Activated B cell treated with CpG ODN at 0.5 μM for 24 hours (primary cell): ENCODE measurements at regions of chr18 and their contacts with region 1.

Region 1: GRCh38 chr18:3593904-3594661 is 144.1 kb downstream of the TGIF1 start:
- DNase-seq: peak; percentile 76
- ATAC-seq: peak; percentile 78
- H3K4me3 Mint-ChIP-seq: peak overlapping the region; percentile 90
- H3K27ac Mint-ChIP-seq: peak overlapping the region; percentile 94
- H3K4me1 Mint-ChIP-seq: peaks cover 65% of the 10 kb centered on the region
- H3K27me3 Mint-ChIP-seq: no peaks in the 10 kb centered on the region
- CTCF ChIP-seq: no peak

Region 2: DNA sequence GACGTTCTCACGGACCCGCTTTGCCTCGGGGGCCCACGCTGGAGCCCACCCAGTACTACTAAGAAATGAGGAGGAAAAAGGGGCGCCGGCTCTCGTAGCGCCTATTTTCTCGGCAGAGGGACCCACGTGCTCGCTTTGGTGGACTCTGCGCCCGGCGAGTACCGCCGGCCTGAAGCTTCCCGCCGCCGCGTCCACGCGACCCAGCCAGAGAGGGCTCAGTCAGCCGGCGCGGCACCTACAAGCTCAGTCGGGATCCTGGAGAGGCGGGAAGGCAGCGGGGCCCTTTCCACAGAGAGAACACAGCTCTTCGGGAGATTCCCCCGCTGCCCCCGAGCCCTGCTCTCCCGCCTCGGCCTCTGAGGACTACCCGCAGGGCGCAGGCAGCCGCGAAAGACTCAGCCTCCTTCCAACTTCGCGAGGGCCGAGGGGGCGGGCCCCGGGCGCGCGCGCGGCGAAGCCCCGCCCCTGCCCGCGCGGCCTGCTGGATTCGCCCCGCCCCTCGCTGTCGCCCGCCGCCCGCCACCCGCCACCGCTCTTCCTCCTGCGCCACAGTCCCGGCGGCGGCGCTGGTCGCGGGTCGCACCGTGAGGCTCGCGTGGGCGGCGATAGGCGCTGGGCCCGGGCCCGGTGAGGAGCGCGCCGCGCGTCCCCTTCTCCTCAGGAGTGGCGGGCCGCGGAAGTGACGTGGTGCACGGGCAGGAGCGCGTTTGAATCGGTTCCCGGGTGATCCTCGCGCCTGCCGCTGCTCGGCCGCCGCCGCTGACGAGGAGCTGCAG is 938.7 kb before region 1 on chr18 and contains the start of gene SMCHD1:
- CTCF ChIA-PET with region 1: interaction called, 5 read pairs
- POLR2A ChIA-PET with region 1: no interaction called
- intact Hi-C with region 1: loop called (anchors 2 kb)
- DNase-seq: peak; percentile 90
- ATAC-seq: peak; percentile 74
- H3K4me3 Mint-ChIP-seq: peak within 1 kb of the TSS; percentile 96
- H3K27ac Mint-ChIP-seq: peak within 1 kb of the TSS; percentile 98
- H3K4me1 Mint-ChIP-seq: peaks cover 44% of the 10 kb centered on the region
- H3K27me3 Mint-ChIP-seq: no peaks in the 10 kb centered on the region
- CTCF ChIP-seq: no peak
- total RNA-seq, gene SMCHD1: 111 and 144 TPM in 2 replicates

Region 3: GRCh38 chr18:3217948-3218647 is 376.0 kb before region 1 on chr18:
- CTCF ChIA-PET with region 1: no interaction called
- POLR2A ChIA-PET with region 1: no interaction called
- intact Hi-C with region 1: no loop called
- DNase-seq: no peak
- ATAC-seq: no peak
- H3K4me3 Mint-ChIP-seq: no peak overlapping the region
- H3K27ac Mint-ChIP-seq: no peak overlapping the region
- H3K4me1 Mint-ChIP-seq: no peaks in the 10 kb centered on the region
- H3K27me3 Mint-ChIP-seq: no peaks in the 10 kb centered on the region
- CTCF ChIP-seq: no peak

Region 4: DNA sequence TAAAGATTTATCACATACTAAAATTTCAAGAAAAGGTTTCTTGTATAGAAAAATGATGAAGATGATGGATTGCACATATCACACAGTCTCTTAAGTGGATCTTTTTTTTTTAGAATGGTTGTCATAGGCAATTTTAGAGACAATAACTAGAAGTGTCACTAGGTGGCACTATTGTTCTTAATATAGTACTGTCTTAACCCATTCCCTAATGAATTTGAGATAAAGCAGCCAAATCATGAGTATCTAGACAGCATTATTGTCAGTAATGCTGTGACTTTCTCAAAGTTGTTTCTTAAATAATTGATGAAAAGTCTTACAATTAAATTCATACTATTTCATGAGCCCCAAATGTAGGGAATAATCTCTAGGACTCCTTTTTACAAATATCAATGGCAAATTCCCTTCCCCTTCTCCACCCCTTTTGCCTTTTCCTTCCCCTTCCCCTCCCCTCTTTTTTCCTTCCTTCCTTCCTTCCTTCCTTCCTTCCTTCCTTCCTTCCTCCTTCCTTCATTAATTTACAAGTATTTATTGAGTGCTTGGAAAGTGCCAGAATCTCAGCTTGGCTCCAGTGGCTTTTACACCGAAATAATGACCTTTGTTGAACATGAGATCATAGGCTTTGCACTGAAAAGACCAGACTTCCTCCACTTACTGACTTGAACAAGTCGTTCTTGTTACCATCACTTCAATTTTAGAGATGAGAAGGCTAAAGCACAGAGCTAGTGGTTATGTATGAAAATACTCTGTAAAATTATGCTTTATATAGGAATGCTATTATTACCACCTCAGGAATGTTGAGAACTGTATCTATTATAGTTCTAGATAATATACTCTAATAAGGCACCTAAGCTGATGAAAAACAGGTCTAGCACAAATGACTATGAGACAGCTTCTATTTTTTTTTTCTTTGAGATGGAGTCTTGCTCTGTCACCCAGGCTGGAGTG is 312.4 kb before region 1 on chr18:
- CTCF ChIA-PET with region 1: interaction called, 26 read pairs
- POLR2A ChIA-PET with region 1: interaction called, 39 read pairs
- intact Hi-C with region 1: loop called (anchors 1 kb)
- DNase-seq: no peak
- ATAC-seq: peak; percentile 39
- H3K4me3 Mint-ChIP-seq: no peak overlapping the region
- H3K27ac Mint-ChIP-seq: no peak overlapping the region
- H3K4me1 Mint-ChIP-seq: peaks cover 41% of the 10 kb centered on the region
- H3K27me3 Mint-ChIP-seq: no peaks in the 10 kb centered on the region
- CTCF ChIP-seq: peak; percentile 49

Region 5: GRCh38 chr18:3402982-3403451 is 191.1 kb before region 1 on chr18:
- CTCF ChIA-PET with region 1: no interaction called
- POLR2A ChIA-PET with region 1: interaction called, 46 read pairs
- intact Hi-C with region 1: loop called (anchors 1 kb)
- DNase-seq: no peak
- ATAC-seq: peak; percentile 20
- H3K4me3 Mint-ChIP-seq: peak overlapping the region; percentile 15
- H3K27ac Mint-ChIP-seq: peak overlapping the region; percentile 94
- H3K4me1 Mint-ChIP-seq: peaks cover 60% of the 10 kb centered on the region
- H3K27me3 Mint-ChIP-seq: no peaks in the 10 kb centered on the region
- CTCF ChIP-seq: no peak

Region 6: DNA sequence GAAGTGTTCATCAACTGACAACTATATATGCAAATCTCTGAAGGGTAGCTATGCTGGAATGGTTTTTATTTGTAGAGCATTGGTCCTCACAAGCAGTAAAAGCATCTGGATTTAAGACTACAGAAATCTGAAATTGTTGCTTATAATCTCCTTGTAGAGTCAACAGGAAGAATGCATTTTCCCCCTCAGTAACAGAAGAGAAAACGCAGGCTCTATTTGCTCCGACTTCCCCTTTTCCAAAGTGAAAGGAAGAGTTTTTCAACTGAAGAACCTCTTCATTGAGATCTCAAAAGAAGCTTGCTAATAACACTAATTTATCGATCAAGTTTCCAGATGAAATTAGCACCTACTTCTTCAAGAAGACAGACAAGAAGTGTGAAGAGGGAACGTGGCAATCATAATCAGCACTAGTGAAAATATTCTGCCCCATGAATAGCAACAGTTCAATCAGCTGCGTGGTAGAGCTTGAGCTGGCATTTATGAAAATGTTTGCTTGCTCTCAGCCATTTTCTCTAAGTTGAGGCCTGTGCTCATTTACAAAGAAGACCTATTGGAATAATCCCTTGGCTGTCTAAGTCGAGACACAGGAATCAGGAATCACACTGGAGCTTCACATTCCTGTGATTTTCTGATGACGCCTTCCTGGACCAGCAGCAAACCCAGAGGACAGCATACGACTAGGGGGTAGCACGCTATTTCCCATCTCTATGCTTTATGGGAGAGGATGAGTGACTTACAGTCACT is 100.4 kb before region 1 on chr18:
- CTCF ChIA-PET with region 1: interaction called, 3 read pairs
- POLR2A ChIA-PET with region 1: interaction called, 38 read pairs
- intact Hi-C with region 1: loop called (anchors 2 kb)
- DNase-seq: no peak
- ATAC-seq: peak; percentile 35
- H3K4me3 Mint-ChIP-seq: peak overlapping the region; percentile 83
- H3K27ac Mint-ChIP-seq: peak overlapping the region; percentile 88
- H3K4me1 Mint-ChIP-seq: peaks cover 43% of the 10 kb centered on the region
- H3K27me3 Mint-ChIP-seq: peaks cover 2% of the 10 kb centered on the region
- CTCF ChIP-seq: no peak

Region 7: GRCh38 chr18:3660739-3661515 is 66.8 kb after region 1 on chr18:
- CTCF ChIA-PET with region 1: interaction called, 75 read pairs
- POLR2A ChIA-PET with region 1: interaction called, 52 read pairs
- intact Hi-C with region 1: loop called (anchors 1 kb)
- DNase-seq: no peak
- ATAC-seq: peak; percentile 71
- H3K4me3 Mint-ChIP-seq: peak overlapping the region; percentile 56
- H3K27ac Mint-ChIP-seq: peak overlapping the region; percentile 69
- H3K4me1 Mint-ChIP-seq: peaks cover 28% of the 10 kb centered on the region
- H3K27me3 Mint-ChIP-seq: no peaks in the 10 kb centered on the region
- CTCF ChIP-seq: no peak